ENCODE measurements at regions of chr17 and their contacts with region 1.

Region 1: DNA sequence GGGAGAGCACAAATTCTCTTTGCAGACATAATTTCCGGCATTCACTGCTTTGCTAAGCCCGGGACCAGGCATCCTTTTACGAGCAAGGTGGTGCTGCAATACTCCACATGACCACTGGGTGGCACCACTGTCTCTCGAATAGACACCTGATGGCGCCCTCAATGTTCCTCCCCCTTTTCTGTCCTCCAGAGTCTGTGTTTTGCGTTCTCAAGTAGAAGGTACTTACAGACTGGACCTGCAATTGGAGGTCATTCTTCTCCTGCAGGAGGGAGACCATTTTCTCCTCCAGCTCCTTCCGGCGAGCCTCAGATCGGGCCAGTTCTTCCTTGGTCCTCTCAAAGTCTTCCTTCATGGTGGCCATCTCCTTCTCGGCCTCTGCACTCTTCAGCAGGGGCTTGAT is 45.2 kb downstream of the MYH13 start:
- DNase-seq: peak; percentile 70
- H3K4me3 Mint-ChIP-seq: no peak overlapping the region
- H3K27ac Mint-ChIP-seq: no peak overlapping the region
- H3K4me1 Mint-ChIP-seq: no peaks in the 10 kb centered on the region
- H3K27me3 Mint-ChIP-seq: no peaks in the 10 kb centered on the region

Region 2: GRCh38 chr17:10316801-10317542 is 10.7 kb before region 1 on chr17:
- CTCF ChIA-PET with region 1: interaction called, 12 read pairs
- POLR2A ChIA-PET with region 1: no interaction called
- DNase-seq: peak; percentile 34
- H3K4me3 Mint-ChIP-seq: no peak overlapping the region
- H3K27ac Mint-ChIP-seq: no peak overlapping the region
- H3K4me1 Mint-ChIP-seq: peaks cover 8% of the 10 kb centered on the region
- H3K27me3 Mint-ChIP-seq: no peaks in the 10 kb centered on the region

Measured in activated CD4-positive, alpha-beta memory T cell treated with anti-CD3 and anti-CD28 coated beads, Interleukin-2, amount 10 ng/mL, durations not matched to agents 7 days and 5 days (primary cell).